ENCODE measurements at regions of chr2 and their contacts with region 1.

Region 1: GRCh38 chr2:205925373-205926337 is 160.3 kb downstream of the INO80D start:
- DNase-seq: peak; percentile 65 to 67
- H3K4me3 ChIP-seq: peak overlapping the region in 2 of 3 donors; percentile 26 to 49
- H3K27ac ChIP-seq: peak overlapping the region; percentile 63 to 69
- H3K4me1 ChIP-seq: no peaks in the 10 kb centered on the region
- H3K27me3 ChIP-seq: no peaks in the 10 kb centered on the region
- CTCF ChIP-seq: peak; percentile 62 to 95 (median 88)
- POLR2A ChIP-seq: no peak

Region 2: DNA sequence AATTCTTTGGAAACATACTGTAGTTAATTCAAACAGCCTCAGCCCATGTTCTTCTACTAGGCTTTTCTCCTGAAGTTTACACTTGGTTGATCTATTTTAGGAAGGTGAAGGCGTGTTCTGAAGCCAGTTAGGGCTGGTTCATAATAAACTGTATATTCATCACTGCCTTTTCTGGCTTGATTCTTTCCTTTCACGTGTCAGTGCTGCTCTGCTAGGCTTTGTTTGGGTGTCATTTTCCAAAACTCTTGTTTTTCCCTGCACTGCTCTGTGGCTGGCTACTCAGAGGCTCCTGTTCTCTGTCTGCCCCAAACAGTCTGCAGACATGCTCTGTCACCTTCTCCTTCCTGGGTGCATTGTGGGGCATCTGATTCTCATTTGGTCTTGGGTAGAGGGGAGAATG is 1244.2 kb before region 1 on chr2:
- intact Hi-C with region 1: no loop called
- DNase-seq: no peak
- H3K4me3 ChIP-seq: no peak overlapping the region
- H3K27ac ChIP-seq: no peak overlapping the region
- H3K4me1 ChIP-seq: no peaks in the 10 kb centered on the region
- H3K27me3 ChIP-seq: no peaks in the 10 kb centered on the region
- CTCF ChIP-seq: no peak
- POLR2A ChIP-seq: no peak

Region 3: DNA sequence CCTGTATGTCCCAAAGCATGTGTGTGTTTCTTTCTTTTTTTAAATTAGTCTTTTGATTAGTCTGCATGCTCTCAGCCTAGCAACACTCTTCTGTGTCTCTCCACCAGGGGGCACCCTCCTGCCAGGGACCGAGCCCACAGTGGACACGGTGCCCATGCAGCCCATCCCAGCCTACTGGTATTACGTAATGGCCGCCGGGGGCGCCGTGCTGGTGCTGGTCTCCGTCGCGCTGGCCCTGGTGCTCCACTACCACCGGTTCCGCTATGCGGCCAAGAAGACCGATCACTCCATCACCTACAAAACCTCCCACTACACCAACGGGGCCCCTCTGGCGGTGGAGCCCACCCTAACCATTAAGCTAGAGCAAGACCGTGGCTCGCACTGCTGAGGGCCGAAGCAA is 149.5 kb before region 1 on chr2:
- intact Hi-C with region 1: loop called (anchors 5 kb)
- DNase-seq: no peak
- H3K4me3 ChIP-seq: no peak overlapping the region
- H3K27ac ChIP-seq: peak overlapping the region; percentile 19 to 20
- H3K4me1 ChIP-seq: no peaks in the 10 kb centered on the region
- H3K27me3 ChIP-seq: no peaks in the 10 kb centered on the region
- CTCF ChIP-seq: peak in 2 of 3 donors; percentile 44 to 54
- POLR2A ChIP-seq: no peak

Region 4: GRCh38 chr2:207845202-207845864 is 1919.7 kb after region 1 on chr2:
- intact Hi-C with region 1: no loop called
- DNase-seq: no peak
- H3K4me3 ChIP-seq: no peak overlapping the region
- H3K27ac ChIP-seq: no peak overlapping the region
- H3K4me1 ChIP-seq: no peaks in the 10 kb centered on the region
- H3K27me3 ChIP-seq: no peaks in the 10 kb centered on the region
- CTCF ChIP-seq: no peak
- POLR2A ChIP-seq: no peak